IMR-90 (cell line): ENCODE measurements at regions of chr4 and their contacts with region 1.

Region 1: DNA sequence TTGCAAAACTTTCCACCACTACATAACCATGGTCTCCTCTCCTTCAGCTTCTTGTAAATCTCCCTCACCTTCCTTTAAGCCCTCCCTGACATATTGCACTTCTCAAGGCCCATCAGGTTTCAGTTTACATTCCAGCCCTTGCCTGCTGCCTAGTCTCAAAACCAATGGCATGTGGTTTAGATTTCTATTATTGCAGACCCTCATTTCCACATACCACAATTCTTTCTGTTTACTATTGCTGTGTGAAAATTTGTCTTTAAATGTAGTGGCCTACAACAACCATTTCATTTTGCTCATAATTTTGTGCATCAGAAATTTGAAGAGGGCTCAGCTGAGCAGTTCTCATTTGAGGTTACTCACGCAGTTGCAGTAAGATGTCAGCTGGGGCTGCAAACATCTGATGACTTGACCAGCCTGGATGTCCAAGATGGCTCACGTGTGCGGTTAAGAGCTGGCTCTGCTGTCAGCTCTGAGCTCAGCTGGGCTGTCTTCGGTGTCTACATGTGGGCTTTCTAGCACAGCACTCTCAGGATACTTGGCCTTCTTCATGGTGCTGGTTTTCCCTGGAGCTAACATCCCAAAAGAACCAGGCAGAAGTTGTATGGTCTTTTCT is 29.9 kb upstream of the SOD3 start:
- DNase-seq: peak; percentile 76
- ATAC-seq: peak; percentile 60
- H3K4me3 ChIP-seq: no peak overlapping the region
- H3K27ac ChIP-seq: peak overlapping the region; percentile 27; the same call in 1 of the 2 replicates
- H3K4me1 ChIP-seq: peaks cover 11% of the 10 kb centered on the region
- H3K27me3 ChIP-seq: no peaks in the 10 kb centered on the region
- CTCF ChIP-seq: no peak
- POLR2A ChIP-seq: no peak
- RAD21 ChIP-seq: no peak

Region 2: GRCh38 chr4:24722026-24722568 is 43.4 kb before region 1 on chr4:
- CTCF ChIA-PET with region 1: no interaction called
- POLR2A ChIA-PET with region 1: no interaction called
- dilution Hi-C with region 1: no loop called
- in situ Hi-C with region 1: no loop called
- intact Hi-C with region 1: no loop called
- DNase-seq: no peak
- ATAC-seq: no peak
- H3K4me3 ChIP-seq: no peak overlapping the region
- H3K27ac ChIP-seq: no peak overlapping the region
- H3K4me1 ChIP-seq: no peaks in the 10 kb centered on the region
- H3K27me3 ChIP-seq: peaks cover 8% of the 10 kb centered on the region
- CTCF ChIP-seq: no peak
- POLR2A ChIP-seq: no peak
- RAD21 ChIP-seq: 0 out of 2 replicates have a peak, but pooled peaks have one; percentile 11

Region 3: GRCh38 chr4:24736066-24736465 is 29.4 kb before region 1 on chr4:
- CTCF ChIA-PET with region 1: no interaction called
- POLR2A ChIA-PET with region 1: no interaction called
- dilution Hi-C with region 1: no loop called
- in situ Hi-C with region 1: no loop called
- intact Hi-C with region 1: no loop called
- DNase-seq: peak; percentile 20
- ATAC-seq: no peak
- H3K4me3 ChIP-seq: no peak overlapping the region
- H3K27ac ChIP-seq: no peak overlapping the region
- H3K4me1 ChIP-seq: peaks cover 2% of the 10 kb centered on the region; the same call in 1 of the 2 replicates
- H3K27me3 ChIP-seq: 0 out of 2 replicates have a peak, but pooled peaks cover 2% of the 10 kb centered on the region
- CTCF ChIP-seq: peak; percentile 45
- POLR2A ChIP-seq: no peak
- RAD21 ChIP-seq: peak; percentile 58

Region 4: DNA sequence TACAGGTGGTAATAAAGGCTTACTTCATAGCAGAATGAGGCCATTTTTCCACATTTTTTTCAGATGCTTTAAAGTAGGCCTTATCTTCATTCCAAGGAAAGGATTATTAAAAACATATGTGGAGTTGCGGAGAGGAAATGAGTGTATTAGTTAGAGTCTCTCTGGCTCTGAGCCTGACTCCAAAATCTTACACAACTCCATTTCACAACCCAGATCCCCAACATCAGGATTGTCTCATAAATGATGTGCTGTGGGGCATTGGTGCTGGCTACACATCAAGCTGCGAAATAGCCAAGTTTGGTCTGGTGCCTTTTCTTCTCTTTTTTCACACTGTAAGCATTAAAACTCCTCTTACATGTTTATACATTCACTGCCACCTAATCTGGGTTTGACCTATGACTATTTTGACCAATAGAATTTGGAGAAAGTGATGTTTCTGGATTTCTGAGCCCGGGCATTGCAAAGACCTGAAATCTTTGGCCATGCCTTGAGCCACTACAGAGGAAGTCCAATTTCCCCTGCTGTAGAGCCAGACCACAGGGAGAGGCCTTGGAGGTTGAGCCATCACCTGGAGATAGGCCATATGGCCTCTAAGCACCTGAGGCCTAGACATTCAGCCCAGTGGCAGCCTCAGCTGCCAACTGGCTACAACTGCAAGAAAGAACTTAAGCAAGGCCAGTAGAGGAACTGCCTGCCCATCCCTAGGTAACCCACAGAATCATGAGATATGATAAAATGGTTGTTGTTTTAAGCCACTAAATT is 13.2 kb after region 1 on chr4:
- CTCF ChIA-PET with region 1: no interaction called
- POLR2A ChIA-PET with region 1: no interaction called
- dilution Hi-C with region 1: no loop called
- in situ Hi-C with region 1: no loop called
- intact Hi-C with region 1: loop called (anchors 2 kb)
- DNase-seq: peak; percentile 98
- ATAC-seq: peak; percentile 88
- H3K4me3 ChIP-seq: no peak overlapping the region
- H3K27ac ChIP-seq: peak overlapping the region; percentile 83
- H3K4me1 ChIP-seq: peaks cover 18% of the 10 kb centered on the region
- H3K27me3 ChIP-seq: no peaks in the 10 kb centered on the region
- CTCF ChIP-seq: no peak
- POLR2A ChIP-seq: no peak
- RAD21 ChIP-seq: no peak

Region 5: GRCh38 chr4:25509646-25510045 is 744.2 kb after region 1 on chr4:
- CTCF ChIA-PET with region 1: no interaction called
- POLR2A ChIA-PET with region 1: no interaction called
- dilution Hi-C with region 1: no loop called
- in situ Hi-C with region 1: no loop called
- intact Hi-C with region 1: no loop called
- DNase-seq: no peak
- ATAC-seq: no peak
- H3K4me3 ChIP-seq: no peak overlapping the region
- H3K27ac ChIP-seq: no peak overlapping the region
- H3K4me1 ChIP-seq: no peaks in the 10 kb centered on the region
- H3K27me3 ChIP-seq: no peaks in the 10 kb centered on the region
- CTCF ChIP-seq: no peak
- POLR2A ChIP-seq: no peak
- RAD21 ChIP-seq: no peak